ENCODE measurements at regions of chr3 and their contacts with region 1.

Region 1: DNA sequence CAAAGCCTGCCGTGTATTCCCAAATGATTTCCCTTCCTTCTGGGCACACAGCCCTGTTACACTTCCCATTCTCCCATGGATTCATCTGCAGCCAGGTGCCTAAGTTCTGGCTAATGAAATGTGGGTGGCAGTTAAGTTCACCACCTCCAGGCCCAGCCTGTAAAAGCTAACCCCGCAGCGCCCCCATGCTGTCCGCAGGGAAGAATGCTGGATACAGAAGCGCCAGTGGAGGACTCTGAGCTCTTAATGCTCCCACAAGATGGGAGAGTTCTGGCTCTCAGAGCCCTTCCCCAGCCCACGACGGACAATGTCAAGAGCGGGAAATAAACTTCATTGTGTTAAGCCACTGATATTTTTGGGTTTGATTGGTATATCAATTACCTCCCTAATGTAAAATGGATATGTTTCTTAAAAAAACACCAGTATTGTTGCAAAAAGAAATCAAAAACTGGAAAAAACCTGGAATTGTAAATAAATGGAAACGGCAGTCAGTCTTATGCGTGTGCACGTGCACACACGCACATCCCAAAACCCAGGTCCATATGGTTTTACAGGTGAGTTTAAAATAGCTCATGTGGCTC is 37.7 kb upstream of the FGD5 start:
- DNase-seq: no peak
- ATAC-seq: no peak
- H3K4me3 ChIP-seq: no peak overlapping the region
- H3K4me3 Mint-ChIP-seq: no peak overlapping the region
- H3K27ac ChIP-seq: no peak overlapping the region
- H3K27ac Mint-ChIP-seq: no peak overlapping the region
- H3K4me1 ChIP-seq: no peaks in the 10 kb centered on the region
- H3K4me1 Mint-ChIP-seq: no peaks in the 10 kb centered on the region
- H3K27me3 ChIP-seq: no peaks in the 10 kb centered on the region
- H3K27me3 Mint-ChIP-seq: peaks cover 0 to 22% (median 11%) of the 10 kb centered on the region in 5 donors

Region 2: GRCh38 chr3:14633819-14634424 is 147.1 kb before region 1 on chr3:
- CTCF ChIA-PET with region 1: no interaction called
- POLR2A ChIA-PET with region 1: no interaction called
- intact Hi-C with region 1: loop called in 1 of 2 experiments (anchors 2 kb)
- DNase-seq: peak; percentile 24 to 63 (median 47)
- ATAC-seq: peak; percentile 82
- H3K4me3 ChIP-seq: no peak overlapping the region
- H3K4me3 Mint-ChIP-seq: no peak overlapping the region
- H3K27ac ChIP-seq: no peak overlapping the region
- H3K27ac Mint-ChIP-seq: no peak overlapping the region
- H3K4me1 ChIP-seq: no peaks in the 10 kb centered on the region
- H3K4me1 Mint-ChIP-seq: peaks cover 0 to 2% (median 0%) of the 10 kb centered on the region in 7 donors
- H3K27me3 ChIP-seq: no peaks in the 10 kb centered on the region
- H3K27me3 Mint-ChIP-seq: peaks cover 16 to 46% (median 21%) of the 10 kb centered on the region in 5 donors

Region 3: DNA sequence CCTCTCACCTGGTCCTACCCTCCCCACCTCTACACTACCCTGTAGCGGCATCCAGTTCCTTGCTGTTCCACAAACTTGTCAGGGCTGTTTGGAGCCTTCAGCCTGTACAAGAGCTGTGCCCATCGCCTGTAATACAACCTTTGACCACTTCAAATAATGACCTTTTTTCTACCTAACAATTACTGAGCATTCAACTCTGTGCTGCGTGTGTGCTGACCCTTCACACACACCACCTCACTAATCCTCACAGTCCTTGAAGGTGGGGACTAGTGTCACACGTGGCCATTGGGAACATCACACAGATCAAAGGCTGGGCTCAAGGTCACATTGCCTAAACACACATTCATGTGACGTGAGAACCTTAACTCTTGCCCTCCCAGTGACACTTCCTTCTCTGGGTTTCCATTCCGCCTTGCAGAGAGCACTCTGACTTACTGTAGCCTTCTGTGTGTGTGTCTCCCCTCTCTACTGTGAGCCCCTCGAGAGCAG is 103.0 kb before region 1 on chr3:
- CTCF ChIA-PET with region 1: no interaction called
- POLR2A ChIA-PET with region 1: no interaction called
- intact Hi-C with region 1: loop called in 1 of 2 experiments (anchors 10 kb)
- DNase-seq: no peak
- ATAC-seq: no peak
- H3K4me3 ChIP-seq: no peak overlapping the region
- H3K4me3 Mint-ChIP-seq: no peak overlapping the region
- H3K27ac ChIP-seq: no peak overlapping the region
- H3K27ac Mint-ChIP-seq: peak overlapping the region in 4 of 9 donors; percentile 22 to 74 (median 56)
- H3K4me1 ChIP-seq: no peaks in the 10 kb centered on the region
- H3K4me1 Mint-ChIP-seq: peaks cover 0 to 1% (median 0%) of the 10 kb centered on the region in 7 donors
- H3K27me3 ChIP-seq: no peaks in the 10 kb centered on the region
- H3K27me3 Mint-ChIP-seq: peaks cover 0 to 3% (median 0%) of the 10 kb centered on the region in 5 donors

Region 4: GRCh38 chr3:14716591-14716990 is 64.4 kb before region 1 on chr3:
- CTCF ChIA-PET with region 1: no interaction called
- POLR2A ChIA-PET with region 1: no interaction called
- intact Hi-C with region 1: no loop called
- DNase-seq: no peak
- ATAC-seq: no peak
- H3K4me3 ChIP-seq: no peak overlapping the region
- H3K4me3 Mint-ChIP-seq: no peak overlapping the region
- H3K27ac ChIP-seq: no peak overlapping the region
- H3K27ac Mint-ChIP-seq: no peak overlapping the region
- H3K4me1 ChIP-seq: no peaks in the 10 kb centered on the region
- H3K4me1 Mint-ChIP-seq: no peaks in the 10 kb centered on the region
- H3K27me3 ChIP-seq: no peaks in the 10 kb centered on the region
- H3K27me3 Mint-ChIP-seq: peaks cover 0 to 8% (median 0%) of the 10 kb centered on the region in 5 donors

Measured in naive thymus-derived CD4-positive, alpha-beta T cell (primary cell).